Thyroid gland (tissue), 4 donors: ENCODE measurements at regions of chr6 and their contacts with region 1.

Region 1: GRCh38 chr6:125764121-125764671 is 14.8 kb downstream of the HEY2 start:
- DNase-seq: no peak
- H3K4me3 ChIP-seq: no peak overlapping the region
- H3K27ac ChIP-seq: no peak overlapping the region
- H3K4me1 ChIP-seq: peaks cover 4 to 13% of the 10 kb centered on the region in 2 donors
- H3K27me3 ChIP-seq: no peaks in the 10 kb centered on the region
- CTCF ChIP-seq: no peak
- POLR2A ChIP-seq: no peak

Region 2: GRCh38 chr6:125314019-125314581 is 450.1 kb before region 1 on chr6:
- intact Hi-C with region 1: loop called (anchors 5 kb)
- DNase-seq: peak; percentile 57 to 73
- H3K4me3 ChIP-seq: no peak overlapping the region
- H3K27ac ChIP-seq: no peak overlapping the region
- H3K4me1 ChIP-seq: no peaks in the 10 kb centered on the region
- H3K27me3 ChIP-seq: no peaks in the 10 kb centered on the region
- CTCF ChIP-seq: peak; percentile 43 to 87 (median 78)
- POLR2A ChIP-seq: no peak

Region 3: GRCh38 chr6:126002755-126003679 is 238.8 kb after region 1 on chr6:
- intact Hi-C with region 1: no loop called
- DNase-seq: no peak
- H3K4me3 ChIP-seq: no peak overlapping the region
- H3K27ac ChIP-seq: no peak overlapping the region
- H3K4me1 ChIP-seq: no peaks in the 10 kb centered on the region
- H3K27me3 ChIP-seq: no peaks in the 10 kb centered on the region
- CTCF ChIP-seq: no peak
- POLR2A ChIP-seq: no peak

Region 4: DNA sequence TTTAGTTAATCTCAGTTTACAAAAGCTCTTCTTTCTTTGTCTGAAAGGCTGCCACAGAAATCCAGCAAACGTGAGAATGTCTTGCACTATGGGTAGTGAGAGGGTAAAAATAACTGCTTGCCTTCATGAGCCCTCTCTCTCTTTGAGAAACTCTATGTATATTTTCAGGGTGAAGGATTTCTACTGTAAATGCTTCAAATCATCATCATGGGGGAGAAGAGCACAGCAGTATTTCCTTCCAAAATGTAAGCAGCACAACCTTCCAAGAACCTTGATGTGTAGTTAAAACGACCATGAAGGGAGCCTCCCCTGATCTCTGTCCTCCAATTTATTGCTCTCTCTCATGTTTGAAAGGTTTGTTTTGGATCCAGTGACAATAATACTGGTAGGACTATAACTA is 434.4 kb after region 1 on chr6:
- intact Hi-C with region 1: no loop called
- DNase-seq: no peak
- H3K4me3 ChIP-seq: no peak overlapping the region
- H3K27ac ChIP-seq: no peak overlapping the region
- H3K4me1 ChIP-seq: no peaks in the 10 kb centered on the region
- H3K27me3 ChIP-seq: no peaks in the 10 kb centered on the region
- CTCF ChIP-seq: no peak
- POLR2A ChIP-seq: no peak